Activated B cell treated with CpG ODN at 0.5 μM for 24 hours (primary cell): ENCODE measurements at regions of chr6 and their contacts with region 1.

Region 1: DNA sequence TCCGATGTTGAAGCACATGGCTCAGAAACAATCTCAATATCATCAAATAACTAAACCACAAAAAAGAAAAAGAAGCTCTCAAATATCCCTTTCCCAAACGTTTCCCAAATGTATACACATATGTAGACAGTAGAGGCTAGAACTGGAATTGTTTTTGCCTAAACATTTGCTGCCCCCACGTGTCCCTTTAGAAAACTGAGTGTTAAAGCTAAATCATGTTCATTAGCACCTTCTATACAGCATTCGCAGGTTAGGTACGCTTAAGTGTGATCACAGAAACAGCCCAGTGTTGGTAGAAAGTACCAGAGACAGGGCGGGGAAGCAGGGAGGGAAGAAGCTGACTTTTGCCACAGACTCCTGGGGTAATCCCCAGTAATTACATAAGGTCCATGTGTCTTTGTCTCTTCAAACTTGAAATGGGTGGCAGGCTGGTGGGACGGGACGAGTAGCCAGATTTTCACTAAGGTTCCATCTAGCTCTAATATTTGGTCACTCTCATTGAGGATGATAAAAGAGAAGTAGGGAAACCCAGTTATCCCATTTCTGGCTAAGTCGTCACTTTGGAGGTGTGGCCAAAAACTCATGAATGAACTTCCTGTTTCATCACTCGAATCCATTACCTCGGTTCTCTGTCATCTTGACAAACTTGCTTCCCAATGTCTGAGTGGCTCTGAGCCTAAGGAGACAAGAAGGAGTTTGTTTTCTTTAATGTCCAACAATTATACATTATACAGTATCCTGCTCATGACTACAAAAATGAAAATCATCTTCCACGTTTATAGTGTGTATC is 15.0 kb upstream of the TFAP2A start:
- DNase-seq: no peak
- ATAC-seq: peak; percentile 18
- H3K4me3 Mint-ChIP-seq: peak overlapping the region; percentile 20
- H3K27ac Mint-ChIP-seq: no peak overlapping the region
- H3K4me1 Mint-ChIP-seq: peaks cover 22% of the 10 kb centered on the region
- H3K27me3 Mint-ChIP-seq: peaks cover 46% of the 10 kb centered on the region
- CTCF ChIP-seq: no peak

Region 2: DNA sequence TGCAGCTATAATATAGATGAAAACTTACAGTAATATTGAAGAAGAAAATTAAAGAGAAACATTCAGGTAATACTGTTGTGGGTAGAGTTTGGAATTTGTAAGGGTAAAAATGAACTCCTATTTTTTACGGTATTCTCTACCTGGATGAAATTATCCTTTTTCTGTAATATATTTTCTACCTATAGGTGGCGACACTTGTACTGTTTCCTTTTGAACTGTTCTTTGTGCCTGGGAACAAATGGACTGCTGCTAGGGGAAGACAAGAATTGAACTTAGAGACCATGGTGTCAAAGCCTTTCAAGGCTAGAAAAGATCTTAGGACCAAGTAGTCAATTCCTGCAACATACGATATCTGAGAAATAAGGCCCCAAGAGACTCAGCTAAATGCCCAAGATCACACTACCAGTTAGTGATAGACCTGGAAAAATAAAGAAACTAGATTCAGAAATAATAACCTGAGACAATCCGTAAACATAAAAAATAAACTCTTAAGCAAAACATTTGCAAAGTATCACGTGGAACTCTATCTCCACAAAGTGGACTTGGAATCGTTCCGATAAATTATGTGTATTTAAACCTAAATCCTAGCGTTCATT is 398.8 kb before region 1 on chr6:
- CTCF ChIA-PET with region 1: no interaction called
- POLR2A ChIA-PET with region 1: no interaction called
- intact Hi-C with region 1: loop called (anchors 10 kb)
- DNase-seq: no peak
- ATAC-seq: no peak
- H3K4me3 Mint-ChIP-seq: no peak overlapping the region
- H3K27ac Mint-ChIP-seq: no peak overlapping the region
- H3K4me1 Mint-ChIP-seq: no peaks in the 10 kb centered on the region
- H3K27me3 Mint-ChIP-seq: no peaks in the 10 kb centered on the region
- CTCF ChIP-seq: no peak

Region 3: GRCh38 chr6:10136636-10137035 is 293.2 kb before region 1 on chr6:
- CTCF ChIA-PET with region 1: no interaction called
- POLR2A ChIA-PET with region 1: no interaction called
- intact Hi-C with region 1: no loop called
- DNase-seq: no peak
- ATAC-seq: no peak
- H3K4me3 Mint-ChIP-seq: no peak overlapping the region
- H3K27ac Mint-ChIP-seq: no peak overlapping the region
- H3K4me1 Mint-ChIP-seq: no peaks in the 10 kb centered on the region
- H3K27me3 Mint-ChIP-seq: no peaks in the 10 kb centered on the region
- CTCF ChIP-seq: no peak

Region 4: DNA sequence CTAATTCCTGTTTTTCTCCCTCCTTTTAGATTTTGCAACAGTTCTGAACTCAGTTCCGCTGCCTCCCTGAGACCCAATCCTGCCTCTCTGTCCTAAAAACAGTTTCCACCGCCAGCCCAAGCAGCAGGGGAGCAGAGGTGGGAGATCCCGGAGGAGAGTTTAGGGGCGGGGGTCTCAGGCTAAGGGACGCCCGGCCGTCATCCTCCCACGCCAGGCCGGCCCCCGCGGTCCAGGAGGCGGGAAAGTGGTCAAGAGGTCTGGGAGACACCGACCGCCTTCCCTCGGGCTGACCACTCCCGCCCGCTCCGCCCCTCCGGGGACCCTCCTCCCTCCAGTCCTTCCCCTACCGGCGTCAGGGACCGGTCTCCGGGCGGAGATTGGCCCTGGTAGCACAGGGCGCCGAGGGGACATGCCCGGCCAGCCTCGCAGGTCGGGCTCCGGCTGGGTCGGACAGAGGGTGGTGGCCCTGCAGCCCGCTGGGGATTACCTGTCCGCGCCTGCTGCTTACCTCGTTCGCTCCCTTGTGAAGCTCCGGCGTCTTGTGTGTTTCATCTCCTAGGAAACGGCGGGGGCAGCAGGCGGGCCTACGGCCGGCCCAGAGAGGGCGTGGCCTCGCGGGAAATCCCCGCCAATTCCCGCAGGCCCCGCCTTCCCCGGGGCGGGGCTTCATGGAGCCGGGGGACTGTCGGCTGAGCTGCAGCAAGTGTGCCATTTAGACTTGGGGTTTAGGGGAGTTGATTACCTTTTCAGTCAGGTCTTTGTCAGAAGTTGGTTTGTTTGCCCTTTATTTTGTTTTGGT is 408.4 kb after region 1 on chr6 and contains the start of gene MAK:
- CTCF ChIA-PET with region 1: no interaction called
- POLR2A ChIA-PET with region 1: no interaction called
- intact Hi-C with region 1: no loop called
- DNase-seq: peak; percentile 91
- ATAC-seq: peak; percentile 94
- H3K4me3 Mint-ChIP-seq: peak within 1 kb of the TSS; percentile 83
- H3K27ac Mint-ChIP-seq: peak within 1 kb of the TSS; percentile 77
- H3K4me1 Mint-ChIP-seq: peaks cover 23% of the 10 kb centered on the region
- H3K27me3 Mint-ChIP-seq: peaks cover 31% of the 10 kb centered on the region
- CTCF ChIP-seq: no peak
- total RNA-seq, gene MAK: 0.15 TPM in 1 of 2 replicates, not detected in the other